Colonic mucosa (tissue), 4 donors: ENCODE measurements at regions of chr5 and their contacts with region 1.

Region 1: DNA sequence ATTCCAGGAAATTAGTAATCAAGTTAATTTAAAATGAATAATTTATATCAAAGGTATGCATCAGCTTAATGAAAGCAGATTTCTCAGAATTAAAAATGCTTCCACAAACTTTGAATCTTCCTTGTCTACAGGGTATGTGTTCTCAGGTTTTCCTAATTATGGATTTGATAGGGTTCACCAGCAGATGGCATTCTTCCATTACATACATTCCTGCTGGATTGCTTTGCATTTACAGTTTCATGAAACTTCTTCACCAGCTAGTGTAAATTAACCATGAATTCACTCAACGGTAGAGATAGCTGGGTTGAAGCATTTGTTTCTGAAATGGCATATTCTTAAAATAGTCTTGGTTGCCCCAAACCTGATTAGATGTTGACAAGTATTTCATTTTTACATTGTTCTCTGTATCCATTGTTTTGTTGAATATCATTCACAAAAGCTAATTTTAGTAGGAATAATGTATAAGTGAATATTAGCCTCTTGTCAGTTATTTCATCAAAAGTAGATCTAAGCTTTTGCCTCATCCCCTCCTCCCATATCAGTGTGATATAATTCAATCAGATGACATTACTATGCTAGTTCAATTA is 68.7 kb upstream of the WDR41 start:
- DNase-seq: no peak
- H3K4me3 ChIP-seq: no peak overlapping the region
- H3K27ac ChIP-seq: no peak overlapping the region
- H3K4me1 ChIP-seq: no peaks in the 10 kb centered on the region
- H3K27me3 ChIP-seq: no peaks in the 10 kb centered on the region
- CTCF ChIP-seq: peak; percentile 43

Region 2: DNA sequence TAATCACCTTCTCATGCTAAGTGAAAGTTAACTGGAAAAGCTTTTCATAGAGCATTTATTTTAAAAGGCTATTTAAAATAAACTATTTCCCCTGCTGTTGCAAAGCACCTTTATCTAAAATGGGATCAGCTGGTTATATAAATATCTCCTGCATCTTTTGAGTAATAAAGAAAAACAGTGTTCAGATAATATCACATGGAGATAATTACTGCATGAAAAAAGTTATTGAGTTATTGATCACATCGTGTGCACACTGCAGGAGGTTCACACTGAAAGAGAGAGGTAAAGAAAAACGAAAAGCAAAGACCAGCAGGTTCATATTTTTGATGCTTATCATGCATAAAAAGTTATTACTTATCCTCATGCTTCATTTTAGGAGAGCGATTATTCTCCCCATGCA is 133.1 kb after region 1 on chr5:
- intact Hi-C with region 1: no loop called
- DNase-seq: no peak
- H3K4me3 ChIP-seq: no peak overlapping the region
- H3K27ac ChIP-seq: no peak overlapping the region
- H3K4me1 ChIP-seq: no peaks in the 10 kb centered on the region
- H3K27me3 ChIP-seq: no peaks in the 10 kb centered on the region
- CTCF ChIP-seq: no peak

Region 3: GRCh38 chr5:78008356-78008967 is 447.7 kb after region 1 on chr5:
- intact Hi-C with region 1: loop called (anchors 5 kb)
- DNase-seq: no peak
- H3K4me3 ChIP-seq: no peak overlapping the region
- H3K27ac ChIP-seq: no peak overlapping the region
- H3K4me1 ChIP-seq: no peaks in the 10 kb centered on the region
- H3K27me3 ChIP-seq: no peaks in the 10 kb centered on the region
- CTCF ChIP-seq: peak; percentile 64